ENCODE measurements at regions of chr1 and their contacts with region 1.

Region 1: GRCh38 chr1:28180306-28181305 is 4.1 kb upstream of the PTAFR start:
- DNase-seq: no peak
- ATAC-seq: no peak
- H3K4me3 ChIP-seq: no peak overlapping the region; the same call in 1 of the 2 replicates
- H3K27ac ChIP-seq: no peak overlapping the region
- H3K4me1 ChIP-seq: peaks cover 26% of the 10 kb centered on the region
- H3K27me3 ChIP-seq: no peaks in the 10 kb centered on the region
- CTCF ChIP-seq: no peak
- EP300 ChIP-seq: no peak
- POLR2A ChIP-seq: no peak
- RAD21 ChIP-seq: no peak

Region 2: GRCh38 chr1:28193701-28194161 is 13.1 kb after region 1 on chr1:
- CTCF ChIA-PET with region 1: interaction called, 8 read pairs
- POLR2A ChIA-PET with region 1: interaction called, 64 read pairs
- RAD21 ChIA-PET with region 1: interaction called, 68 read pairs
- SMC1A ChIA-PET with region 1: interaction called, 74 read pairs
- in situ Hi-C with region 1: no loop called
- intact Hi-C with region 1: no loop called
- DNase-seq: no peak
- ATAC-seq: peak; percentile 21; the same call in 2 of the 3 replicates
- H3K4me3 ChIP-seq: no peak overlapping the region
- H3K27ac ChIP-seq: no peak overlapping the region
- H3K4me1 ChIP-seq: peaks cover 20% of the 10 kb centered on the region
- H3K27me3 ChIP-seq: no peaks in the 10 kb centered on the region
- CTCF ChIP-seq: no peak
- EP300 ChIP-seq: no peak
- POLR2A ChIP-seq: no peak
- RAD21 ChIP-seq: no peak

Measured in GM12878 (cell line).